Activated CD4-positive, alpha-beta memory T cell treated with anti-CD3 and anti-CD28 coated beads, Interleukin-2, amount 10 ng/mL, durations not matched to agents 7 days and 5 days (primary cell): ENCODE measurements at regions of chr17 and their contacts with region 1.

Region 1: GRCh38 chr17:42548070-42548837 is 4.5 kb upstream of the HSD17B1 start:
- DNase-seq: peak; percentile 80
- H3K4me3 Mint-ChIP-seq: no peak overlapping the region
- H3K27ac Mint-ChIP-seq: no peak overlapping the region
- H3K4me1 Mint-ChIP-seq: peaks cover 10% of the 10 kb centered on the region
- H3K27me3 Mint-ChIP-seq: no peaks in the 10 kb centered on the region

Region 2: GRCh38 chr17:42494673-42495072 is 53.6 kb before region 1 on chr17:
- CTCF ChIA-PET with region 1: no interaction called
- POLR2A ChIA-PET with region 1: no interaction called
- DNase-seq: no peak
- H3K4me3 Mint-ChIP-seq: no peak overlapping the region
- H3K27ac Mint-ChIP-seq: no peak overlapping the region
- H3K4me1 Mint-ChIP-seq: peaks cover 11% of the 10 kb centered on the region
- H3K27me3 Mint-ChIP-seq: peaks cover 9% of the 10 kb centered on the region

Region 3: DNA sequence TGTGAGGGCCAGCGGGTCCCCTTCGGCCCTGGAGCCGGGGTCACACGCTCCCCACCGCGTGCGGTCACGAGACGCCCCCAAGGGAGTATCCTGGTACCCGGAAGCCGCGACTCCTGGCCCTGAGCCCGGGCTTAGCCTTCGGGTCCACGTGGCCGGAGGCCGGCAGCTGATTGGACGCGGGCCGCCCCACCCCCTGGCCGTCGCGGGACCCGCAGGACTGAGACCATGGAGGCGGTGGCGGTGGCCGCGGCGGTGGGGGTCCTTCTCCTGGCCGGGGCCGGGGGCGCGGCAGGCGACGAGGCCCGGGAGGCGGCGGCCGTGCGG is 12.2 kb before region 1 on chr17 and contains the start of gene NAGLU:
- CTCF ChIA-PET with region 1: interaction called, 19 read pairs
- POLR2A ChIA-PET with region 1: interaction called, 17 read pairs
- DNase-seq: peak; percentile 89
- H3K4me3 Mint-ChIP-seq: peak within 1 kb of the TSS; percentile 82
- H3K27ac Mint-ChIP-seq: peak within 1 kb of the TSS; percentile 75
- H3K4me1 Mint-ChIP-seq: peaks cover 42% of the 10 kb centered on the region
- H3K27me3 Mint-ChIP-seq: peaks cover 12% of the 10 kb centered on the region
- total RNA-seq, gene NAGLU: 15.9 to 17.5 TPM